Activated CD4-positive, alpha-beta T cell treated with anti-CD3 and anti-CD28 coated beads for 36 hours (primary cell): ENCODE measurements at regions of chr10 and their contacts with region 1.

Region 1: DNA sequence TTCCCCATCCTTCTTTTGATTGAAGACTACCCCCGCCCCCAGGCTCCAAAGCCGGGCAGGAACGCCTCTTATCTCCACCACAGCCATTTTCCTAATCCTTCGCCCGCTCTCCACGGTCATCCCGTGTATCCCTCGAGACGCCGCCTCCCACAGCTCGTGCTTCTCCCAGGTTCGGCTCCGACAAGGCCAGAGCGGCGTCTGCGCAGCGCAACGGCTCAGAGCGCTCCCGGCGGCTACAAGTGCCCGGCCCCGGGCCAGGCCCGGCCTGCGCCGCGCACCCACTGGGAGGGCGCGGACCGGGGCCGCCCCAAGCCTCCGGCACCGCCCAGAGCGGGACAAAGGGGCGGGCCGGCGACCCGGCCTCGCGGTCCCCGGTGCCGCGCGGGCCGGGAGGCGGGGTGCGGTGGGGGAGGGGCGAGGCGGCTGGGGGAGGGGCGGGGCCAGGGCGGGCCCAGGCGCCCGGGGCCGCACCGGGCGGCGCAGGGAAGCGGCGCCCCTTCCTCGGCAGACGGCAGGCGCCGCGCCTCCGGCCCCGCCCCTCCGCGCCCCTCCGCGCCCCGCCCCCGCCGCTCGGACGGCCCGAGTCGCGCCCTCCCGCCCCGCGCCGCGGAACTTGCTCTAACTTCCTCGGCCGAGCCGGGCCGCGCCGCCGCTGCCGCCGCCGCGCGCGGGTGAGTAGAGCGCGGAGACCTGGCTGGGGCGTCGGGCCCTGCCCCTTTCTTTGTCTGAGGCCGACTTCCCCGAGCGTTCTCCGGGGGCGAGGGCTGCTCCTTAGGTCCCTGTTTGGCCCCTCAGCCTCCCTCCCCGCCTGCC is at the start of gene TSPAN14:
- DNase-seq: peak; percentile 86
- ATAC-seq: peak; percentile 67
- H3K4me3 Mint-ChIP-seq: peak within 1 kb of the TSS; percentile 99
- H3K27ac Mint-ChIP-seq: peak within 1 kb of the TSS; percentile 98
- H3K4me1 Mint-ChIP-seq: peaks cover 45% of the 10 kb centered on the region
- H3K27me3 Mint-ChIP-seq: no peaks in the 10 kb centered on the region
- total RNA-seq, gene TSPAN14: 37.6 to 43.8 TPM

Region 2: GRCh38 chr10:79322616-79323543 is 1131.0 kb before region 1 on chr10:
- CTCF ChIA-PET with region 1: no interaction called
- POLR2A ChIA-PET with region 1: no interaction called
- intact Hi-C with region 1: loop called in 1 of 2 experiments (anchors 10 kb)
- DNase-seq: peak; percentile 91
- ATAC-seq: peak; percentile 75
- H3K4me3 Mint-ChIP-seq: peak overlapping the region; percentile 46
- H3K27ac Mint-ChIP-seq: peak overlapping the region; percentile 94
- H3K4me1 Mint-ChIP-seq: peaks cover 70% of the 10 kb centered on the region
- H3K27me3 Mint-ChIP-seq: no peaks in the 10 kb centered on the region

Region 3: DNA sequence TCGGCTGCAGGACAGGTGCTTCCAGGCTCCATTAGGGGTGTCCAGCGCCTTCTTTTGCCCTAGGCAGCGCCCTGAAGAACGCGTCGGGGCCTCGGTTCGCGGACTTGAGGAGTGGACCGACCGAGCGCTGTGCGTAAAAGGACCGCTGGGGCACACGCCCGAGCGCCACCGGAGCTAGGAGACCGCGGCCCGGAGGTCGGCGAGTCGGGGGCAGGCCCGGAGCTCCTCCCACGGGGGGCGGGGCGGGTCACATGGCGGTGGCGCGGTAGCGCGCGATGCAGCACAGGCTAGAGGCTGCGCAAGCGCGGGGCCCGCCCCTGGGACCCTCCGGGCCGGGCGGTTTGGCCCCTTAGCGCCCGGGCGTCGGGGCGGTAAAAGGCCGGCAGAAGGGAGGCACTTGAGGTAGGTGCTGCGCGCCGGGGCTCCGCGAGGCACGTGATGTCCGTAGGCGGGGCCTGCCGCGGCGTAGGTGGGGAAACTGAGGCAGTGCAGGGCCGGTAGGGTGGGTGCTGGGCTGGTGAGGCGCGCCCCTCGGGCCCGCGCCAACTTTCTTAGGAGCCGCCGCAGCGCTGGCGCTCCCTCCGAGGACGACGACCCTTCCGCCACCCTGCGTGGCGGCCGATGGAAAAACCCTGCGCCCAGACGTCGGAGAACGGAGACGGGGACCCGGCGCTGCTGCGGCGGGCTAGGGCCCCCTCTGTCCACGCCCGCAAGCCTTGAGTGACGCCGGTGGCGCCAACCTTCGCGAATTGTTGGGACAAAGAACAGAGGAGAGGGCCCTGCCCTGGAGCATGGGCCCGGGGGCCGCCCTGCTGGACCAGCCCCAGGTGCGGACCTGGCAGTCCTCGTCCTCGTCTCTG is 45.4 kb before region 1 on chr10 and contains the start of gene PRXL2A:
- CTCF ChIA-PET with region 1: interaction called, 6 read pairs
- POLR2A ChIA-PET with region 1: no interaction called
- intact Hi-C with region 1: loop called (anchors 1 to 2 kb)
- DNase-seq: peak; percentile 91
- ATAC-seq: peak; percentile 84
- H3K4me3 Mint-ChIP-seq: peak within 1 kb of the TSS; percentile 76
- H3K27ac Mint-ChIP-seq: peak within 1 kb of the TSS; percentile 94
- H3K4me1 Mint-ChIP-seq: peaks cover 40% of the 10 kb centered on the region
- H3K27me3 Mint-ChIP-seq: no peaks in the 10 kb centered on the region
- total RNA-seq, gene PRXL2A: 15.0 to 17.6 TPM

Region 4: GRCh38 chr10:80487791-80488538 is 34.1 kb after region 1 on chr10:
- CTCF ChIA-PET with region 1: interaction called, 5 read pairs
- POLR2A ChIA-PET with region 1: interaction called, 5 read pairs
- intact Hi-C with region 1: loop called (anchors 1 kb)
- DNase-seq: peak; percentile 73
- ATAC-seq: peak; percentile 34
- H3K4me3 Mint-ChIP-seq: peak overlapping the region; percentile 54
- H3K27ac Mint-ChIP-seq: peak overlapping the region; percentile 91
- H3K4me1 Mint-ChIP-seq: peaks cover 99% of the 10 kb centered on the region
- H3K27me3 Mint-ChIP-seq: no peaks in the 10 kb centered on the region

Region 5: DNA sequence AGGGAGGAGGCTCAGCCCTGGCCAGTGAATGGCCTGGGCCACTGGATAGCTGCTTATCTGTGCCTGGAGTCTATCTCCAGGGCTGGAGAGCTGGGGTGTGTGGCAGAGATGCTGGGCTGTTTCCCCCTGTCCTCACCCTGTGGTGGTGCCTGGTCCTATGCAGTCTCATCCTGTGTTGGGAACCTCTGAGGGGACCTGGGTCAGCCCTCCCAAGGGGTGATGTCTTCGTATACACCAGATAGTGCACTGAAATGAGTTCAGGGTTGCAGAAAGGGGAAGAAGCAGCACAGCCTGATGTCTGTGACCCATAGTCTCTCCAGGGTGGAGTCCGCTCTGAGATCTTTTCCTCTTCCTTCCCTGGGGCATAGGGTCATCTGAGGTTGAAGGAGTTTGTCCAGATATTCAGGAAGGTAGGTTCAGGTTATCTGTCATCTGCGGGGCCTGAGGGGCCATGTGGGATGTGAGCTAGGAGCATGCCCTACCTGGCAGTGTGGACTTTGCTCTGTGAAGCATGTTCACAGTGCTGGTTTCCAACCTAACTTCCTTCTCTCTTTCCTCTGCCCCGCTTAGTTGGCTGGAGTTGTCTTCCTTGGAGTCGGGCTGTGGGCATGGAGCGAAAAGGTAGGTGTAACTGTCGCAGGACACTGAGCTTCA is 50.4 kb after region 1 on chr10:
- CTCF ChIA-PET with region 1: interaction called, 372 read pairs
- POLR2A ChIA-PET with region 1: interaction called, 5 read pairs
- intact Hi-C with region 1: loop called (anchors 1 to 2 kb)
- DNase-seq: no peak
- ATAC-seq: no peak
- H3K4me3 Mint-ChIP-seq: no peak overlapping the region
- H3K27ac Mint-ChIP-seq: peak overlapping the region; percentile 98
- H3K4me1 Mint-ChIP-seq: peaks cover 65% of the 10 kb centered on the region
- H3K27me3 Mint-ChIP-seq: no peaks in the 10 kb centered on the region